GM10248 (cell line): ENCODE measurements at regions of chr4 and their contacts with region 1.

Region 1: DNA sequence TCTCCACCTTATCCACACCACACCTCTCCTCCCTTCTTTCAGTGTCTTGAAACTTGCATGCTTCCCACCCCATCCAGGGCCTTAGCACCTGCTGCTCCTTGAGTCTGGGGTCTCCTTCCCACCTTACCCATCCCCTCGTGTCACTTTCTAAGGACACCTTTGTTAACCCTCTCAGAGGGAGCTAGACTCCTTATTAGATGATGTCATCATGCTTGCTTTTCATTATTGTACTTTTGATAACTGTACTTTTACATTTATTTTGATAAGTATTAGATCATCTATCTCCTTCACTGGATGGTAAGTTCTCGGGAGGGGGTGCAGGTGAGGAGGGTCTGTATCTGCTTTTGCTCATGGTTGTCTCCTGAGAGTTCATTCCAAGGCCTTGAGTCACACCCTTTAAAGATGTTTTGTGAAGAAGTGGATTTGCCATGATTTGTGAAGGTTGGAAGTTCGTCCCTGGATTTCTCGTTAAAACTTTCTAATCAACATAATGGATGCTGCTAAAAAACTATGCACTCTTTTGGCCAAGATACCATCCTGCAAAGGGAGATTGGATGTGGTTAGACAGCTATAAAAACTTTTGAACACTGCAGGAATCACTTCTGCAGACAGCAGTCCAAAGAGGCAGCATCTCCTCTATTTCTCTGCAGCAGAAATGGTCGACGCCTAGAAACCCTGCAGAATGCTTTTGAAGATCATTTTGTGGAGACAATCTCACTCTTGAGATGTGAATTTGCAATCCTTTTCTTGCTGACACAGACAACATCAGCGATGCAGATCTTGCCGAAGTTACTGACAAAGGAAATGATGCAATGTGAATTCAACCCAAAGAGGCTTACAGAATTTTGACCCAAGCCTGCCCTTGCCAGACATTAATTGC is 69.6 kb downstream of the ENPP6 start:
- DNase-seq: no peak
- CTCF ChIP-seq: no peak

Region 2: DNA sequence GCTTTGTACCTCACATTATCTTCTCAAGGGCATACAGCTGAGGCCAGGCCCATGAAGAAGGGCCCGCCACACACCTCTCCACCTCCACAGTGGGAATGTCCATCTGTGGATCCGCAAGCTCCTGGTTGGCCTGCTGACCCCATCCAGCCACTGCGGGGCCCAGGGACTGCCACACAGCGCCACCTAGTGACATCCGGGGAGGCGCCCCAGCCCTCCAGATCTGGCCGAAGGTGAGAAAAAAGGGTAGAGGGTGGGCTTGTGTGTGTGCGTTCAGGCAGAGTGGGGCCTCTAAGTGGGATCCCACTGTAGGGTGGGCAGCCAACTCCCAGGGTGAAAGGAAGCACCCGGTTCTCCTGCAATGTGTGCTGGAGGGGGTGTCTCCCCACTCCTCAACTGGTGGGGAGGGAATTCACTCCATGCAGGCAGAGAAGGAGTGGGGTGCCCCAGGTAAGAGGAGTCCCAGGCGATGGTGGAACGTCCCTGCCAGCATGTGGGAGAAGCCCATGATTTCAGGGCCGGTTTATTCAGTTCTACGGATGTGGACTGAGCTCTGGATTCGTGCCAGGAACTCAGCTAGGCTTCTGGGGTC is 47.7 kb before region 1 on chr4:
- CTCF ChIA-PET with region 1: no interaction called
- POLR2A ChIA-PET with region 1: no interaction called
- DNase-seq: peak; percentile 65
- CTCF ChIP-seq: no peak

Region 3: DNA sequence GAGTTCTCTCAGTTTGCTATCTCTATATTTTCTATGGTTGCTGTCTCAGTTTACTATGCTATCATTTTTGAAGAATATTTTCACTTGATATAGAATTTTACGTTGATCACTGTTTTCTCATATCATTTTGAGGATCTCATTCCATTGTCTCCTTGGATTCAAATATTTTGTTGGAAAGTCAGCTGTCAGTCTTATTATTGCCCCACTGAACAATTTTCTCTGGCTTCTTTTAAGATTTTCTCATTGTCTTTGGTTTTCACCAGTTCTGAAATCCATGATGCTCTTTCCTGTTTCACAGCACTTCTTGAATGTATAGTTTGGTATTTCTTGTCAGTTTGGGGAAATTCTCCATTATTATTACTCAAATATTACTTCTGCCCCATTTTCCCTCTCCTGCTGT is 11.6 kb before region 1 on chr4:
- CTCF ChIA-PET with region 1: no interaction called
- POLR2A ChIA-PET with region 1: no interaction called
- DNase-seq: no peak
- CTCF ChIP-seq: no peak

Region 4: DNA sequence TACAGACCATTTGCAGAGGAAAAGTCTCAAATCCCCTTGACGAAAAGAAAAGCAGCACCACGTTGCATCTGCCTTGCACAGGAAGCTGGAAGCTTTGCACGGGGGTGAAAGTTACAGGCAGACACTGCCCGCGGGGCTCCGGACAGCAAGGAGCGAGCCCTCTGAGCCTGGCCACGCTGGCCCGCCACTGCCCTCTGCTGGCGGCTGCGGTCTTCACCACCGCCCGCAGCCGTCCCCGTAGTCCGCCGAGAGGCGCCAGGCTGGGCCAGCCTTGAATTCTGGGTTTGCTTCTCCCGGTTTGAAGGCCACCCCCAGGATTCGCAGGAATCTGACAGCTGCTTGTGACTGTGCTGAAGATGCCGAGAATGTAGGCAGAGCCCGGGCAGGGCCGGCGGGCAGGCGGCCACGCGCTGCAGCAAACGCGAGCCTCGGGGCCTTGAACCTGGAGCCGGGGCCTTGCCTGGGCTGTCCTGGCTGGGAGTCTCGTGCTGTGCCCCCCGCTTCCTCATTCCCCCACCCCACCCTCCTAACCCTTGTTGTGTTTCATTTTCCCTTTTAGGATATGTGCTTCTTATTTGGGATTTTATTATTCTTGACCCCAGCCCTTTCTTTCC is 20.4 kb after region 1 on chr4:
- CTCF ChIA-PET with region 1: interaction called, 10 read pairs
- POLR2A ChIA-PET with region 1: no interaction called
- DNase-seq: peak; percentile 88
- CTCF ChIP-seq: peak; percentile 92

Region 5: GRCh38 chr4:184453365-184454160 is 305.5 kb after region 1 on chr4:
- CTCF ChIA-PET with region 1: no interaction called
- POLR2A ChIA-PET with region 1: no interaction called
- DNase-seq: peak; percentile 56
- CTCF ChIP-seq: no peak